ENCODE measurements at regions of chr1 and their contacts with region 1.

Region 1: DNA sequence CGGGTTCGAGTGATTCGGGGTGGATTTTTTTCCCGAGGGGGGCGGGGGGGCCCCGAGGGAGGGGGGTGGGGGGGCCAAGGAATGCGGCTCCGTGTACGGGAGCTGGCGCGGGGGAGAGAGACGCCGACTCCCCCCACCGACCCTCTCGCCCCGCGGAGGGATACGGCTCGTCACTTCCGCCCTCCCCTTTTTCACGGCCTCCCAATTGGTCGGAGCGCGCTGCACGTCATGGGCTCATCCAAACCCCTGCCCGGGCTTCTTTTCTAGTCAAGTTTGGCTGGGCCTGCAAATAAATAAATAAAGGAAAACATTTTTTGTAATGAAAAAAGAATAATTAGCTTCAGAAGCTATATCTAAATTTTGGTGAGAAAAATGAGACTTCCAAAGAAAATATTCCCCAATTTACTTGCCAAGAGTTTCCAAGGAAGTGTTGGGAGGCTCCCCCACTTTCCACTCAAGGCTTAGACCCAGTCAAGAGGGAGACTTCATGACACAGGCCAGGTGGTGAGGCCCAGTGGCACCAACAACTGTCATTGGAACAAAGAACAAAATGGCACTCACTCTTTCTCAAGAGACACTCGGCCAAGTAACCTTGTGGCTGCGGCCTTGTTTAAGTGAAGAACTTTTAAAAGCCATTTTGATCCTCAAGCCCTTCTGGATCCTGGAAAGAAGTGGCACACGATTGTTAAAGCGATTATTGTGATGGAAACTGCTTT is at the start of gene POGZ:
- DNase-seq: peak; percentile 94
- H3K4me3 Mint-ChIP-seq: peak within 1 kb of the TSS; percentile 83
- H3K27ac Mint-ChIP-seq: peak within 1 kb of the TSS; percentile 90
- H3K4me1 Mint-ChIP-seq: peaks cover 30% of the 10 kb centered on the region
- H3K27me3 Mint-ChIP-seq: peaks cover 17% of the 10 kb centered on the region
- total RNA-seq, gene POGZ: 67.2 to 73.2 TPM

Region 2: GRCh38 chr1:151384584-151384983 is 74.9 kb before region 1 on chr1:
- CTCF ChIA-PET with region 1: no interaction called
- POLR2A ChIA-PET with region 1: no interaction called
- DNase-seq: no peak
- H3K4me3 Mint-ChIP-seq: no peak overlapping the region
- H3K27ac Mint-ChIP-seq: no peak overlapping the region
- H3K4me1 Mint-ChIP-seq: no peaks in the 10 kb centered on the region
- H3K27me3 Mint-ChIP-seq: no peaks in the 10 kb centered on the region

Region 3: DNA sequence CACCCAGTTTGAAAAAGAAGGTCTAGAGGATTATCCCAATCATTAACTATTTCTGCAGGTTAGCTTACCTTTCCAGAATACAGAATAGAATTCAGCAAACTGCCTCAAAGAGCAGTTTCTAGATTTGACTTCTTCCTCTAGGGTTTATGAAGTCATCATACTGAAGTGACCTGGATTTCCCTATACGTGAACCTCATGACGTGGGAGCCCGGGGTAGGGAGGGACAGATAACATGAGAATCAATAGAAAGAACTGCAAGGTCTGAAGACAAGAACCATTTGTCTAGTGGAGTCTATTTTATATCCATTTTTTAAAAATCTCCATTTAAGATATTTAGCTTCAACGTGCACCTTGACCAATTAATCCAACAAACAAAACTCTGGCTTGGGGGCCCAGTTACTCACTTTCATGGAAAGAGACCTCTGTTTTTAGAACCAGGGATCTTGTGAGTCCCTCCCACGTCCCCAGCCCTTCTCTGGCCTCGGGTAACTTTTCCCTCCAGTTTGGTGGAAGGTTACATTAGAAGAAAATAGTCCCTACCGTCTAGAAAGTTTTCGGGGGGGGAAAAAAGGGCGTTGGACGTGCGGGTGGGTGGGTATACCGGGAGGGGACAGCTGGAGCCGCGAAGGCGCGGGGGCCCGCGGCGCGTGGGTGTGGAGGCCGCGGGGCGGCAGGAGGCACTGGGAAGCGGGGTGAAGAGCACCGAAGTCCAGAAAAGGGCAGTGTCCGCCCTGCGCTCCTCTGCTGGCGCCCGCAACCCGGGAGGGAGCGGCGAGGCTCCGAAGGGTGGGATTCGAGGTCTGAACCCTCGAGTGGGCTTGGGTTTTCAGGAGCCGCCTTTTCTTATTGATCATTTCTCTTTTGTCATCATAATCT is 13.6 kb after region 1 on chr1:
- CTCF ChIA-PET with region 1: no interaction called
- POLR2A ChIA-PET with region 1: interaction called, 54 read pairs
- DNase-seq: no peak
- H3K4me3 Mint-ChIP-seq: peak overlapping the region; percentile 36
- H3K27ac Mint-ChIP-seq: no peak overlapping the region
- H3K4me1 Mint-ChIP-seq: peaks cover 19% of the 10 kb centered on the region
- H3K27me3 Mint-ChIP-seq: peaks cover 5% of the 10 kb centered on the region

Region 4: GRCh38 chr1:151565502-151566189 is 106.2 kb after region 1 on chr1:
- CTCF ChIA-PET with region 1: no interaction called
- POLR2A ChIA-PET with region 1: no interaction called
- DNase-seq: no peak
- H3K4me3 Mint-ChIP-seq: no peak overlapping the region
- H3K27ac Mint-ChIP-seq: no peak overlapping the region
- H3K4me1 Mint-ChIP-seq: peaks cover 19% of the 10 kb centered on the region
- H3K27me3 Mint-ChIP-seq: no peaks in the 10 kb centered on the region

Region 5: GRCh38 chr1:151653397-151653796 is 193.9 kb after region 1 on chr1:
- CTCF ChIA-PET with region 1: no interaction called
- POLR2A ChIA-PET with region 1: no interaction called
- DNase-seq: no peak
- H3K4me3 Mint-ChIP-seq: no peak overlapping the region
- H3K27ac Mint-ChIP-seq: no peak overlapping the region
- H3K4me1 Mint-ChIP-seq: peaks cover 17% of the 10 kb centered on the region
- H3K27me3 Mint-ChIP-seq: no peaks in the 10 kb centered on the region

Measured in activated CD4-positive, alpha-beta memory T cell treated with anti-CD3 and anti-CD28 coated beads, Interleukin-2, amount 10 ng/mL, durations not matched to agents 7 days and 5 days (primary cell).